Upper lobe of right lung (tissue), 1 donor: ENCODE measurements at regions of chr11 and their contacts with region 1.

Region 1: DNA sequence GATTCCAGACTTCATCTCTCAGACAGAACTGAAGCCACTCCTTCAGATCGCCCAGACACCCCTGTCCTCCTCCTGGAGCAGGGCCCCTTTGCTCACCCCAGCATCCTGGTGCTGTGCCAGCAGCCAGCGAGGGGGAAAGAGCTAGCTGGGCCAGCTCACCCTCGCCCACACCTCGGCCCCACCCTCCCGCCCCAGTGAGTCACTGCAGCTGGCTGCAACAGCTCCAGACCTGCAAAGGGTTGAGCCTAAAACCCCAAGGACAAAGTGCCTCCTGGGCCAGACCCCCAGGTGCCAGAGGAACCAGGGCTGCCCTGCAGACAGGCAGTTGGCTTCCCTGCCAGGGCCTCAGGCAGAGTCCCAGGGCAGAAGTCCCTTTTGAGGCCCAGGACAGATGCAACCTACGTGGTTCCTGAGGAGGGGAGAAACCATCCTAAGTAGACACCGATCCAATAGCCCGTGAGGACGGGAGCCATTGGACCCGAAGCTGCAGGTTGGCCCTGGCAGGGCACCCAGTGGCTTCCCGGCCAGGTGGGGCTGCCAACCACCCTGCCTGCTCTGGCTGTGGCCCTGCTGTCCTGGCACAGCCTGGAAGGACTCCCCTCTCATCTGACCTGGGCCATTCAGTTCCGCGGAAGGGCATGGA is 7.2 kb downstream of the AHNAK start:
- DNase-seq: peak; percentile 82
- ATAC-seq: peak; percentile 33
- H3K4me3 ChIP-seq: peak overlapping the region; percentile 6
- H3K27ac ChIP-seq: peak overlapping the region; percentile 99
- H3K4me1 ChIP-seq: peaks cover 74% of the 10 kb centered on the region
- H3K27me3 ChIP-seq: no peaks in the 10 kb centered on the region
- CTCF ChIP-seq: no peak

Region 2: DNA sequence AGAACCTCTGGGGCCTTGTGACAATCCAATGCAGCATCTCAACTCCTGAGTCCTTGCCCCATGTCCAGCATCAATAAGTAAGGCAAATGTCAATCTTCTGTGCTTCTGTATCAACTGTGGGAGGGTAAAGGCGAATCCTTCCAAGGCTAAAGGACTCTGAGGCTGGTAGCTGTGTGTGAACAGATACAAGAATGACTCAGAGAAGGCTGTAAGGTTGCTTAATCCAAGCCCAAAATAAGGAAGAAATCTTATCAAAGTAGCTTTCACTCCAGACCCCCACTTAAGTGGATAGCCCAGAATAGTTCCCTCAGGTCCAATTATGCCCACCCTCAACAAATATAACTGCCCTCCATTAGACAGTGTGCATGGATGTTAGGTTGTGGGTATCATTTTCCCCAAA is 148.7 kb before region 1 on chr11:
- intact Hi-C with region 1: no loop called
- DNase-seq: no peak
- ATAC-seq: no peak
- H3K4me3 ChIP-seq: no peak overlapping the region
- H3K27ac ChIP-seq: no peak overlapping the region
- H3K4me1 ChIP-seq: peaks cover 13% of the 10 kb centered on the region
- H3K27me3 ChIP-seq: no peaks in the 10 kb centered on the region
- CTCF ChIP-seq: no peak

Region 3: GRCh38 chr11:62427630-62428233 is 111.7 kb before region 1 on chr11:
- intact Hi-C with region 1: loop called (anchors 10 kb)
- DNase-seq: no peak
- ATAC-seq: no peak
- H3K4me3 ChIP-seq: no peak overlapping the region
- H3K27ac ChIP-seq: peak overlapping the region; percentile 47
- H3K4me1 ChIP-seq: peaks cover 13% of the 10 kb centered on the region
- H3K27me3 ChIP-seq: no peaks in the 10 kb centered on the region
- CTCF ChIP-seq: no peak

Region 4: GRCh38 chr11:62601394-62602140 is 62.2 kb after region 1 on chr11 and contains the start of gene MTA2:
- intact Hi-C with region 1: no loop called
- DNase-seq: peak; percentile 99
- ATAC-seq: peak; percentile 92
- H3K4me3 ChIP-seq: peak within 1 kb of the TSS; percentile 100
- H3K27ac ChIP-seq: peak within 1 kb of the TSS; percentile 98
- H3K4me1 ChIP-seq: peaks cover 25% of the 10 kb centered on the region
- H3K27me3 ChIP-seq: no peaks in the 10 kb centered on the region
- CTCF ChIP-seq: no peak
- total RNA-seq, gene MTA2: 75.0 TPM